A673 (cell line): ENCODE measurements at regions of chr2 and their contacts with region 1.

Region 1: GRCh38 chr2:136966485-136966884 is 201.1 kb downstream of the THSD7B start:
- DNase-seq: no peak
- H3K4me3 ChIP-seq: no peak overlapping the region
- H3K27ac ChIP-seq: no peak overlapping the region
- H3K4me1 ChIP-seq: no peaks in the 10 kb centered on the region
- H3K27me3 ChIP-seq: no peaks in the 10 kb centered on the region
- CTCF ChIP-seq: no peak

Region 2: DNA sequence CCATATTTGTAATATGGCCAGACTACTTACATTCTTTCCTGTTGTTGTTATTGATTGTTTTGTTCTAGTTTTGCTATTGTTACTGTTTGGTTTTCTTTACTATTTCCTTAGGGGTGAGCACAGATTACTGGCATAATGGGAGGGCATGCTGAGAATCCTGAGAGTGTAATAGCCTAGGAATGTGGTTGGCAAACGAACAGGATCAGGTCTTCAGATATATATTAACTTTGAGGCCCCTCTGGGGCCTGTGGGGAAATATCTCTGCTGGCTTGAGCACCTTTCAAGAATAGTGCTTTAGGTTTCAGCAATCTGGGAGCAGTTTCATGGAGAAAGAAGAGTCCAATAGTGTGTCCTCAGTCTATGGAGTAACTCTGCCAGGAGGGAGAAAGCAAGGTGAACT is 56.7 kb before region 1 on chr2:
- CTCF ChIA-PET with region 1: no interaction called
- POLR2A ChIA-PET with region 1: interaction called, 15 read pairs
- intact Hi-C with region 1: no loop called
- DNase-seq: no peak
- H3K4me3 ChIP-seq: no peak overlapping the region
- H3K27ac ChIP-seq: no peak overlapping the region
- H3K4me1 ChIP-seq: no peaks in the 10 kb centered on the region
- H3K27me3 ChIP-seq: no peaks in the 10 kb centered on the region
- CTCF ChIP-seq: no peak

Region 3: GRCh38 chr2:137047369-137047768 is 80.9 kb after region 1 on chr2:
- CTCF ChIA-PET with region 1: no interaction called
- POLR2A ChIA-PET with region 1: no interaction called
- intact Hi-C with region 1: no loop called
- DNase-seq: no peak
- H3K4me3 ChIP-seq: no peak overlapping the region
- H3K27ac ChIP-seq: no peak overlapping the region
- H3K4me1 ChIP-seq: no peaks in the 10 kb centered on the region
- H3K27me3 ChIP-seq: no peaks in the 10 kb centered on the region
- CTCF ChIP-seq: no peak

Region 4: DNA sequence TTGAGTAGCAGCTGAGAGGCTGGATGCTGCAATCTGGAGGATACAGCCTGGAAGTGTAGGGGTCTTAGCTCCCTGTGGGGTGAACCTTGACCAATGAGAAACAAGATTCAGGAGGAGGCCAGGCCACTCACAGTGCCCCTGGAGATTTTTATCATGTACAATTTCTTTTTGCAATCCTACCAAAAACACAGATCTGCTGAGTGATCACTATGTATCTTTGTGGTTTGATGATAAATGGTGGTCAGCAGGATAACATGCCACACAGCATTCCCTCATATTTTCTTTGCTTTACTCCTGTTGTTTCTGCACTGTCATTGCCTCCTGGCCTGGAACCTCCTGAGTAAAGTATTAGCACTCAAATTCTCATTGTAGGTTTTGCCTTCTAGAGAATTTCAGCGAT is 156.7 kb after region 1 on chr2:
- CTCF ChIA-PET with region 1: no interaction called
- POLR2A ChIA-PET with region 1: no interaction called
- intact Hi-C with region 1: no loop called
- DNase-seq: no peak
- H3K4me3 ChIP-seq: no peak overlapping the region
- H3K27ac ChIP-seq: no peak overlapping the region
- H3K4me1 ChIP-seq: no peaks in the 10 kb centered on the region
- H3K27me3 ChIP-seq: no peaks in the 10 kb centered on the region
- CTCF ChIP-seq: no peak